Endothelial cell of umbilical vein (primary cell): ENCODE measurements at regions of chr16 and their contacts with region 1.

Region 1: GRCh38 chr16:27235055-27235937 is 32.0 kb downstream of the KDM8 start:
- DNase-seq: peak; percentile 96
- H3K4me3 ChIP-seq: no peak overlapping the region
- H3K27ac ChIP-seq: peak overlapping the region; percentile 99
- H3K4me1 ChIP-seq: peaks cover 56% of the 10 kb centered on the region
- H3K27me3 ChIP-seq: no peaks in the 10 kb centered on the region
- CTCF ChIP-seq: peak; percentile 86 to 94
- POLR2A ChIP-seq: no peak

Region 2: DNA sequence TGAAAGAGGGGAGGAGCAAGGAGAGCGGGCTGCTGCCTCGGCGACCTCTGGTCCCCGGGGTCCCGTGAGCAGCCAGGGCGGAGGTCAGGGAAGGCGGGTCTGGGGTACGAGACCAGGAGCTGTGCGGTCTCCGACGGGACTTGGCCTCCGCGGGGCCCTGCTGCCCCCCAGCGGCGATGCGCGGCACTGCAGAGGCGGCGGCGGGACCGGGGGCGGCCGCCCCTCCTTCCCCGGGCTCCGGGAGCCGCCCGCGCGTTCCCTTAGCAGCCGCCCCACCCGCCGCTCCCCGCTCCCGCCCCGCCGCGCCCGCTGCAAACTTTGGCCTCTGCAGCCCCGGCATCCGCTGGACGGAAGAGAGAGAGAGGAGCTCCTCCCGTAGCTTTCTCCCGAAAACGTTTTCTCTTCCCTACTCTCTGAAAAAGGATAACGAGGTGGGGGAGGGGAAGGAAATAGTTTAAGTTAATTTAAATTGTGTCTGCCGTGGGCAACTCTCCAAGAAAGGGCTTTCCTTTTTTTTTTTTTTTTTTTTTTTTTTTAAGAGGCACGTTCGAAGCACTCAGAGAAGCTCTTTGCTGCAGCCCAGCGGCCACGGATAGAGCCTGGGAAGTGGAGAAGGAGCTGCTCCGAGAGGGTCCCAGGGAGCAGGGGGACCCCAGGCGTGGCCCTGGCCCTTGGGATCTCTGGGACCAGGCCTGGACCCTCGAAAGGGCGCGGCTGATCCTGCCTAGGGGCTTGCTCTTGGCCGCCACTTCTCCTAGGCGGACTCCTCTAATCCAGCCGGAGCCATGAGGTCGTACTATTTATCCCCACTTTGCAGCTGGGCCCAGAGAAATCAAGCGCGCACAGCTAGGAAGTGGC is 125.4 kb before region 1 on chr16:
- CTCF ChIA-PET with region 1: interaction called, 11 read pairs
- POLR2A ChIA-PET with region 1: no interaction called
- dilution Hi-C with region 1: no loop called
- intact Hi-C with region 1: no loop called
- DNase-seq: peak; percentile 62
- H3K4me3 ChIP-seq: peak overlapping the region in 2 of 3 experiments; percentile 16 to 22
- H3K27ac ChIP-seq: no peak overlapping the region
- H3K4me1 ChIP-seq: no peaks in the 10 kb centered on the region
- H3K27me3 ChIP-seq: no peaks in the 10 kb centered on the region
- CTCF ChIP-seq: peak; percentile 72 to 88
- POLR2A ChIP-seq: no peak

Region 3: GRCh38 chr16:27164352-27164751 is 70.9 kb before region 1 on chr16:
- CTCF ChIA-PET with region 1: no interaction called
- POLR2A ChIA-PET with region 1: no interaction called
- dilution Hi-C with region 1: no loop called
- intact Hi-C with region 1: no loop called
- DNase-seq: no peak
- H3K4me3 ChIP-seq: no peak overlapping the region
- H3K27ac ChIP-seq: no peak overlapping the region
- H3K4me1 ChIP-seq: no peaks in the 10 kb centered on the region
- H3K27me3 ChIP-seq: peaks cover 0 to 1% of the 10 kb centered on the region in 2 experiments
- CTCF ChIP-seq: no peak
- POLR2A ChIP-seq: no peak

Region 4: DNA sequence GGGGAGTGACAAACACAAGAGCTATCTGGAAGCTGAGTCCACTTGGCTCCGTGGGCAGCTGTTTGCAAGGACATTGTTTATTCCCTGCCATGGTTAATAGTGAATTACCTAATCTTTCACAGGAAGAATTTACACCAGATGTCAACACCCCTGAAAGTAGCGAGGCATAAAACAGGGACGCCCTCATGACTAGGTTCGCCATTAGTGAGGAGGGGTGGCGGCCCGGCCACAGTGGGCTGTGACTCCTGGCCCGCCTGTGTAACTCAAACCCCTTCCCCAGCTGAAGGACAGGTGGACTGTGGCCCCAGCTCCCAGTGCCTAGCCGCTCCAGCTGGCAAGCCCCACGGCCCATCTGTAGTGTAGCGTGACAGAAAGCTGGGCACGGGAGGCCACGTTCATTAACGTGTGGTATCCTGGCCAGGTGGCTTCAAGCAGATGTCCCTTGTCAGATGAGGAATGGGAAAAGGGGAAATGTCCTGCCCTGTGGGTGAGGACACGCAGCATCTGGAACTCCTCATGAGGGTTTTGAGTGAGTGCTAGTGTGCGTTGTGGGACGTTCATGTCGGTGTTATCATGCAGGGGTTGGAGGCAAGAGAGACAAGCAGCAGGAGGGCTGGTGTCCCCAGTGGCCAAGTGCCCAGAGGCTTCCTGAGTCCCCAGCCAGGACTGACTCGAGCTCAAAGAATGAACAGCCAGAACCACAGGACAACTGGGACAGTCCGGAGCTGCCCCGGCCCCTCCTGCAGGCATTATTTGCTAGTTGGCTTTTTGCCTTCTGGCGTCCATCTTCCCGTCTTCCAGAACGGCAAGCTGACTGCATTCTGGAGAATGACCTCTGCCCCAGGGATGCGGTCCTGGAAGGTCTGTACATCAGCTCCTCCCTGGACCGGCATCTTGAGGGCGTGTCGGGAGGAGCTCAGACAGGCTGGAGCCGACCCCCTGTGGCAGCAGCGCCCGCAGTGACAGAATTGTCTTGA is 12.8 kb before region 1 on chr16:
- CTCF ChIA-PET with region 1: interaction called, 15 read pairs
- POLR2A ChIA-PET with region 1: interaction called, 3 read pairs
- dilution Hi-C with region 1: no loop called
- intact Hi-C with region 1: no loop called
- DNase-seq: no peak
- H3K4me3 ChIP-seq: no peak overlapping the region
- H3K27ac ChIP-seq: no peak overlapping the region
- H3K4me1 ChIP-seq: no peaks in the 10 kb centered on the region
- H3K27me3 ChIP-seq: no peaks in the 10 kb centered on the region
- CTCF ChIP-seq: no peak
- POLR2A ChIP-seq: no peak

Region 5: DNA sequence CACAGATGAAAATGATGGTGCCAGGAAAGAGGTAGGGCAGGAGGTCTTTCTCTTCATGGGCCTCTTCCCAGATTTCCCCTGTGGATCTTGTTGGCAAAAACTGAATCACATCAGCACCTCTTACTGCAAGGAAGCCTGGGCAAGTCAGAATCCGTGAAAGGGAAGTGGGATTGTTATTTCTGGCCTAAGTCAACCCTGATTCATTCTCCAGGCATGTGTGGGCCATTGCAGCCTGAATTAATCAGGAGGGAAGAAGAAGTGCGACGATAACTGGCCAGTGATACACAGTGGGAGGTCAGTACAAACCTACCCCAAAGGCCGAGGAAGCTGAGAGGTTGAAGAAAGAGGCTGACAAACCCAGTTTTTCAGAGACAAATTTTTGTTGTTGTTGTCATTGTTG is 51.2 kb after region 1 on chr16:
- CTCF ChIA-PET with region 1: interaction called, 11 read pairs
- POLR2A ChIA-PET with region 1: no interaction called
- dilution Hi-C with region 1: no loop called
- intact Hi-C with region 1: loop called (anchors 1 kb)
- DNase-seq: peak; percentile 98
- H3K4me3 ChIP-seq: no peak overlapping the region
- H3K27ac ChIP-seq: peak overlapping the region; percentile 86
- H3K4me1 ChIP-seq: peaks cover 15% of the 10 kb centered on the region
- H3K27me3 ChIP-seq: no peaks in the 10 kb centered on the region
- CTCF ChIP-seq: no peak
- POLR2A ChIP-seq: peak; percentile 50

Region 6: DNA sequence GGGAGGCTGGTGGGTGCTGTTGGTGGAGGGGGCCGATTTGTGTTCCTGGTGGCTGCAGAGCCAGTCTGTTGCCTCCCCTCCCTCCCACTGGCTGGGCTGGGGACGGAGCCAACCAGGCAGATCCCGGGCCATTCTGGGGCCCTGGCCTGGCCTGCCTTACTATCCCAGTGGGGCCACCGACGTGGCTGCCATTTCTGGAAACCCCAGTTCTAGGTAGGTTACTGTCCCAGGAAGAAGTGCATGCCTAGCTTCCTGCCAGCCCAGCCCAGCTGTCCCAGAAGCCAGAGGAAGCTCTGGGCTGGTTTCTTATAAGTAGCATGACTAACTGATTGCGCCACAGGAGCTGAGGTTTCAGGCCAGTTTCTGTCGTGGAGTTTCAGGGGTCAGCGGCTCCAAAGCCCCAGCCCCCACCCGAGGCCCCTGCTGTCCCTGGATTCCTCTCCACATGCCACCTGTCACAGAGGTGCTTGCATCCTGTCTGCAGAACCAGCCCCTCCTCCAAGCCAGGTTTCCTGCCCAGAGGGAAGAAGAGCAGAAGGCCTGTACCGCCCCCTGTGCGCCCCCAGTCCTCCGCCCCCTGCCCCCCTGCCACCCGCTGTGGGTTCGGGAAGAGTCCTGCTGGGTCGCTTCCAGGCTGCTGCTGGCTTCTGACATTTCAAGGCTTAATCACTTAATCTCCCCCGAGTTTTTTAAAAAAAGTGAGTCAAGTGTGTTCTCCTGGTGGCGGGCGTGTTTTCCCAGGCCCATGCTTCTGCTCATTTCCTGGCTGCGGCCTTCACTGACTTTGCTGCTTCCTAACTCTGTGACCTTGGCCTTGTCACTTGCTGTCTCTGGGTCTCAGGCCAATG is 91.7 kb after region 1 on chr16:
- CTCF ChIA-PET with region 1: interaction called, 26 read pairs
- POLR2A ChIA-PET with region 1: interaction called, 4 read pairs
- dilution Hi-C with region 1: no loop called
- intact Hi-C with region 1: loop called (anchors 1 kb)
- DNase-seq: peak; percentile 78
- H3K4me3 ChIP-seq: no peak overlapping the region
- H3K27ac ChIP-seq: peak overlapping the region; percentile 91
- H3K4me1 ChIP-seq: peaks cover 37% of the 10 kb centered on the region
- H3K27me3 ChIP-seq: no peaks in the 10 kb centered on the region
- CTCF ChIP-seq: peak in 1 of 2 donors; percentile 3
- POLR2A ChIP-seq: peak; percentile 34

Region 7: GRCh38 chr16:27347930-27348685 is 112.8 kb after region 1 on chr16:
- CTCF ChIA-PET with region 1: interaction called, 23 read pairs
- POLR2A ChIA-PET with region 1: no interaction called
- dilution Hi-C with region 1: no loop called
- intact Hi-C with region 1: no loop called
- DNase-seq: no peak
- H3K4me3 ChIP-seq: no peak overlapping the region
- H3K27ac ChIP-seq: no peak overlapping the region
- H3K4me1 ChIP-seq: peaks cover 6% of the 10 kb centered on the region
- H3K27me3 ChIP-seq: no peaks in the 10 kb centered on the region
- CTCF ChIP-seq: no peak
- POLR2A ChIP-seq: no peak

Region 8: GRCh38 chr16:27374804-27375425 is 139.6 kb after region 1 on chr16:
- CTCF ChIA-PET with region 1: interaction called, 299 read pairs
- POLR2A ChIA-PET with region 1: no interaction called
- dilution Hi-C with region 1: no loop called
- intact Hi-C with region 1: no loop called
- DNase-seq: peak; percentile 83
- H3K4me3 ChIP-seq: no peak overlapping the region
- H3K27ac ChIP-seq: no peak overlapping the region
- H3K4me1 ChIP-seq: no peaks in the 10 kb centered on the region
- H3K27me3 ChIP-seq: no peaks in the 10 kb centered on the region
- CTCF ChIP-seq: peak; percentile 67 to 69
- POLR2A ChIP-seq: no peak

Region 9: GRCh38 chr16:27483624-27484023 is 248.3 kb after region 1 on chr16:
- CTCF ChIA-PET with region 1: no interaction called
- POLR2A ChIA-PET with region 1: no interaction called
- dilution Hi-C with region 1: no loop called
- intact Hi-C with region 1: no loop called
- DNase-seq: peak; percentile 6
- H3K4me3 ChIP-seq: no peak overlapping the region
- H3K27ac ChIP-seq: no peak overlapping the region
- H3K4me1 ChIP-seq: no peaks in the 10 kb centered on the region
- H3K27me3 ChIP-seq: no peaks in the 10 kb centered on the region
- CTCF ChIP-seq: no peak
- POLR2A ChIP-seq: no peak